Dendritic cell treated with granulocyte-macrophage colony-stimulating factor and Interleukin-4, amounts not matched to agents 40 ng/mL and 50 ng/mL, for 4 days (primary cell): ENCODE measurements at regions of chr19 and their contacts with region 1.

Region 1: GRCh38 chr19:52962394-52963246 is at the start of gene ZNF816:
- H3K4me3 Mint-ChIP-seq: peak within 1 kb of the TSS; percentile 99
- H3K27ac Mint-ChIP-seq: peak within 1 kb of the TSS; percentile 91
- H3K4me1 Mint-ChIP-seq: peaks cover 20% of the 10 kb centered on the region
- H3K27me3 Mint-ChIP-seq: no peaks in the 10 kb centered on the region

Region 2: GRCh38 chr19:52622261-52622660 is 340.4 kb before region 1 on chr19:
- intact Hi-C with region 1: no loop called
- H3K4me3 Mint-ChIP-seq: no peak overlapping the region
- H3K27ac Mint-ChIP-seq: no peak overlapping the region
- H3K4me1 Mint-ChIP-seq: no peaks in the 10 kb centered on the region
- H3K27me3 Mint-ChIP-seq: no peaks in the 10 kb centered on the region

Region 3: GRCh38 chr19:52786457-52787359 is 175.9 kb before region 1 on chr19 and contains the start of gene ZNF600:
- intact Hi-C with region 1: no loop called
- H3K4me3 Mint-ChIP-seq: peak within 1 kb of the TSS; percentile 87
- H3K27ac Mint-ChIP-seq: peak within 1 kb of the TSS; percentile 86
- H3K4me1 Mint-ChIP-seq: peaks cover 19% of the 10 kb centered on the region
- H3K27me3 Mint-ChIP-seq: peaks cover 8% of the 10 kb centered on the region

Region 4: GRCh38 chr19:52897144-52897935 is 65.3 kb before region 1 on chr19 and contains the start of gene ZNF320:
- intact Hi-C with region 1: loop called (anchors 2 kb)
- H3K4me3 Mint-ChIP-seq: peak within 1 kb of the TSS; percentile 97
- H3K27ac Mint-ChIP-seq: peak within 1 kb of the TSS; percentile 97
- H3K4me1 Mint-ChIP-seq: peaks cover 24% of the 10 kb centered on the region
- H3K27me3 Mint-ChIP-seq: no peaks in the 10 kb centered on the region

Region 5: DNA sequence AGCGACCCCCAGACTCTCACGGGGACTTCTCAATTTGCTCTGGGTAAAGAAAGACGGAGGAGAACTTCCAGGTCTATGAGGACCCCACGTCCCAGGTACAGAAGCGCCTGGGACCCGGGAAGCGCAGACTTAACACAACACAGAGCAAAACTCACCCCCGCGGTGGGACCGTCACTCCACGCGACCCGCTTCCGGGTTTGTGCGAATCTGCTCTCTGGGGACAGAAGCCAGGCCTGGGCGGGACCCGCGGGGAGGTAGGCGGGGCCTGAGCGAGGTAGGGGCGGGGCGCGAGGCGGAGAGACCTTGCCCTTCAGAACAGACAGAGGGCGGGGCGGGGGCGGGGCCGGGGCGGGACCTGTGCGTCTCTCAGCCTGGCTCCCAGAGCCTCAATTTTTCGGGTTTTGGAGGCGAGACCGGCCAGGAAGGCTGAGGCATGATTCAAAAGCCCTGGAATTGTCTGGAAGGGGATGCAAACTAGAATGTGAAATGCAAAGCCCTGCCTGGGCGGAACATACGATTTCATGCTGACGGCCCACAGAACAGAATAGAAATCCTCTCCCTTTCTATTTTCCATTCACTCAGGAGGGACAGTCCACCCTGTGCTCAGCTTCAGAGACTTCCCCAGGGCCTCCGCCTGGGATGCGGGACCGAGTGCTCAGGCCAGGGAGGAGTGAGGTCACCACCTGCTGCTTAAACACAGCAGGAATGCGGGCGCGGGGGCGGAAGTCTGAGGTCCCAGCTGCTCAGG is 20.1 kb before region 1 on chr19:
- intact Hi-C with region 1: loop called (anchors 1 kb)
- H3K4me3 Mint-ChIP-seq: peak overlapping the region; percentile 83
- H3K27ac Mint-ChIP-seq: peak overlapping the region; percentile 86
- H3K4me1 Mint-ChIP-seq: peaks cover 28% of the 10 kb centered on the region
- H3K27me3 Mint-ChIP-seq: peaks cover 13% of the 10 kb centered on the region